K562 (cell line): ENCODE measurements at regions of chr18 and their contacts with region 1.

Region 1: GRCh38 chr18:36129300-36130038 is at the starts of genes ELP2 and SLC39A6:
- DNase-seq: peak; percentile 99
- ATAC-seq: peak; percentile 93
- H3K4me3 ChIP-seq: peak within 1 kb of the TSS; percentile 91
- H3K27ac ChIP-seq: peak within 1 kb of the TSS; percentile 99
- H3K4me1 ChIP-seq: peaks cover 27 to 32% of the 10 kb centered on the region in 2 experiments; a peak in 4 of 5 replicates
- H3K27me3 ChIP-seq: no peaks in the 10 kb centered on the region
- CTCF ChIP-seq: peak in 1 of 3 experiments; percentile 16; a peak in 1 of 6 replicates
- EP300 ChIP-seq: 0 out of 2 replicates have a peak, but pooled peaks have one; percentile 39
- POLR2A ChIP-seq: peak; percentile 93
- RAD21 ChIP-seq: no peak; a peak in 1 of 4 replicates
- polyA plus RNA-seq, gene ELP2: 146 to 172 TPM
- polyA plus RNA-seq, gene SLC39A6: 5.6 to 6.6 TPM

Region 2: GRCh38 chr18:35972197-35973052 is 157.0 kb before region 1 on chr18 and contains the start of gene RMP24:
- CTCF ChIA-PET with region 1: no interaction called
- POLR2A ChIA-PET with region 1: no interaction called
- in situ Hi-C with region 1: no loop called
- intact Hi-C with region 1: loop called (anchors 2 kb)
- DNase-seq: peak; percentile 96 to 99 (median 97)
- ATAC-seq: peak; percentile 96
- H3K4me3 ChIP-seq: peak within 1 kb of the TSS; percentile 87
- H3K27ac ChIP-seq: peak within 1 kb of the TSS; percentile 81
- H3K4me1 ChIP-seq: peaks cover 11 to 13% of the 10 kb centered on the region in 2 experiments; a peak in 2 of 5 replicates
- H3K27me3 ChIP-seq: no peaks in the 10 kb centered on the region; a peak in 1 of 5 replicates
- CTCF ChIP-seq: no peak
- EP300 ChIP-seq: peak; percentile 64
- POLR2A ChIP-seq: peak; percentile 93
- RAD21 ChIP-seq: 0 out of 4 replicates have a peak, but pooled peaks of 1 of the 2 experiments have one; percentile 10

Region 3: DNA sequence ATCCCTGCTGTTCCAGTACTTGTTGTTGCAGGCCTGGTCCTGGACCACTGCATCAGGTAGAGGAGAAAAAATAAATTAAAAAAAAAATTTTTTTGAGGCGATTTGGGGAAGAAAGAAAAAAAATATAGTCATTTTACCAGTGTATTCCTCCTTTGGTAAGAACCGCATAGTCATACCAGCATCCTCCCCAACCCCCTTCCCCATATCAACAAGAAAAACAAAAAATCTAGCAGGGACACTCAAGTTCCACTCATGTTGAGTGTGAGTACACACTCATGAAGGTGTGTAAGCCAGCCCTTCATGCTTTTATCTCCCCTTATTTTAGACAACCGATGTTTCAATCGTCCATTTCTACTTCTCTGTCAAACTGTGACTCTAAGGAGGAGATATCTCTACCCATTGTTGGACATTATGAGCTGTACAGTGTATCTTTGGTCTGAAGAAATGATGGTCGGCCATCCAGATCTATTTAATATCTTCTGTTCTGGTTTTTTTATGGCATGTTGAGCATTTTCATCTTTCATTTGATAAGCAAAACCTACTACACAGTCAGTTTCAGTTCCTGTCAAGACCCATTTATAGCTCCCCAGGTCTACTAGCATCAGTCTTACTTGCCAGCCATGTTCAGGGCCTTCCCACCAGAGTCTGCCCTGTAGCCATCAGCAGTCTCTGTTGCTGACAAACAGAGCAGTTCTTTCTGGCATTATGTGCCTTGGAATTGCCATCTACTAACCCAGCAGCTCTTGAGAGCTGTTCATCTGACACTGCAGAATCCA is 20.2 kb after region 1 on chr18:
- CTCF ChIA-PET with region 1: no interaction called
- POLR2A ChIA-PET with region 1: interaction called, 19 read pairs
- in situ Hi-C with region 1: no loop called
- intact Hi-C with region 1: no loop called
- DNase-seq: no peak
- ATAC-seq: no peak
- H3K4me3 ChIP-seq: no peak overlapping the region
- H3K27ac ChIP-seq: no peak overlapping the region
- H3K4me1 ChIP-seq: no peaks in the 10 kb centered on the region
- H3K27me3 ChIP-seq: no peaks in the 10 kb centered on the region
- CTCF ChIP-seq: no peak
- EP300 ChIP-seq: no peak
- POLR2A ChIP-seq: no peak
- RAD21 ChIP-seq: no peak